ENCODE measurements at regions of chr17 and their contacts with region 1.

Region 1: GRCh38 chr17:49748791-49749190 is 15.1 kb downstream of the FAM117A start:
- DNase-seq: peak in 34 of 35 experiments; percentile 19 to 78 (median 56)
- ATAC-seq: peak; percentile 70 to 78 (median 74)
- H3K4me3 ChIP-seq: no peak overlapping the region
- H3K4me3 Mint-ChIP-seq: peak overlapping the region; percentile 50 to 64 (median 63)
- H3K27ac ChIP-seq: peak overlapping the region; percentile 97
- H3K27ac Mint-ChIP-seq: peak overlapping the region; percentile 96 to 98
- H3K4me1 ChIP-seq: peaks cover 53 to 89% of the 10 kb centered on the region in 2 experiments
- H3K4me1 Mint-ChIP-seq: peaks cover 62 to 90% (median 89%) of the 10 kb centered on the region in 3 donors
- H3K27me3 ChIP-seq: no peaks in the 10 kb centered on the region
- H3K27me3 Mint-ChIP-seq: no peaks in the 10 kb centered on the region

Region 2: DNA sequence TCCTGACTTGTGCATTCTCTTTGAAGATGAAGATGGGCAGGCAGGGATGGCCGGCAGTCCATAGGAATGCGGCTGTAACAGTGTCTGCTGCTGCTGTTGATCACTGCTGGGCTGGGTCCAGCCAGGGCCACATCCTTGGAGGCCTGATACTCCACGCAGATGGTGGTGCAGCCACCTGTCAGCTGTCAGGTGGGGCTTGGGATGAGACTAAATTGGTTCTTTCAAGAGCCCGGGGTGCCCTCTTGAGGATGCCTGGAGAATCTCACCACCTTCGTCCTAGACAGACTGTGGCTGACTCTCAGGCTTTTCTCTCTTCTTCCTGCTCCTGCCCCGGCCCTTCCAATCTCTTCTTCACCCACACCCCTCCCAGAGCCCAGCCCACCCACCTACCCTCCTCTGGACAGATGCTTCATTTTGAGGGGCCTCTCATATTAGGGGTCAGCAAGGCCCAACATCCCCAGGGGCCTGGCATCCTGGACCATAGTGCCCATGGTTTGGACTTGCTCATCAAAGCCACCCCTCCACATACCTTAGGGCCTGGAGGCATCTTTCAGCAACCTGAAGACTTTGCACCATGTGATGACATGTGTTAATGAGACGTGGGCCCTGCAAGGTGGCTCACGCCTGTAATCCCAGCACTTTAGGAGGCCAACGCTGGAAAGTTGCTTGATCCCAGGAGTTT is 1946.3 kb before region 1 on chr17:
- CTCF ChIA-PET with region 1: no interaction called
- POLR2A ChIA-PET with region 1: no interaction called
- DNase-seq: peak in 32 of 35 experiments; percentile 19 to 71 (median 51)
- ATAC-seq: peak; percentile 85 to 93 (median 86)
- H3K4me3 ChIP-seq: no peak overlapping the region
- H3K4me3 Mint-ChIP-seq: no peak overlapping the region
- H3K27ac ChIP-seq: no peak overlapping the region
- H3K27ac Mint-ChIP-seq: no peak overlapping the region
- H3K4me1 ChIP-seq: peaks cover 0 to 6% of the 10 kb centered on the region in 2 experiments
- H3K4me1 Mint-ChIP-seq: no peaks in the 10 kb centered on the region
- H3K27me3 ChIP-seq: peaks cover 0 to 10% of the 10 kb centered on the region in 2 experiments
- H3K27me3 Mint-ChIP-seq: peaks cover 5 to 6% of the 10 kb centered on the region in 2 donors

Region 3: DNA sequence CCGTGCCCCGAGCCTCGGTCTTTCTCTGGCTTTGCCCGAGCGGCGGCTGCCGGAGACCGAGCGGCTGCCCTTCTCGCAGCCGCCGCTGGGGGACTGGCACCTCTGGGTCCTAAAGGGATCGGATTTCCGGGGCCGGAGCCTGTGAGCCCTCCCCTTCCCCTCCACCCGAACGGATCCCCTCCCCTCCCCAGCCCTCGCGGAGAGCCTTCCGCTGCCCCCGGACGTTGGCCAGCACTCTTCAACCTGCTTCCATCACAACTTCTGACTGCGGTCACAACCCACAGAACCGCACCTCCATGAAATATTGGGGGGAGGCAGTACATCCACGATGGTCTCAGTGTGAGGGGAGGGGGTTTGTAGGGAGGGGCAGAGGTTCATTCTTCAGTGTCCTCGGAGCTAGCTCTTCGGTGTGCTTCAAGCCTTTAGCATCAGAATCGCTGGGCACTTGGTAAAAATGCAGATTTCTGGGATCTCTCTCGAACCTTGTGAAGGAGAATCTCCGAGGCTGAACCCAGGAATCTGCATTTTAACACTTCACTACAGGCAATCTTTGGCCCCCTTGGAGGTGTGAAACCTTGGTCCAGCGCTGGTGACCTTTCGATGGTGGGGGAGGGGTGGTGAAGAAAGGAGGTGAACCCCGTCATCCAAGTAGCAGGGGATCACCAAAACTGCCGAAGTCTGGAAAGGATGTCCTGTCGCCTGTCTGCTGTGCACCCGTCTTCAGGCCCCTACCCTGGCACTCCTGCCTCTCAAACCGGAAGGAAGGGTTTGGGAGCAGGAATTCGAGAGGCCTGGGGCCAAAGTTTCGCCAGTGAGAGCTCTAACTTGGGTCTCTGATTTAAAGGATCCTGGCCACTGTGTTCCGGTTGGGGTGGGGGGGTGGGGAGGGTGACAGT is 402.5 kb after region 1 on chr17:
- CTCF ChIA-PET with region 1: no interaction called
- POLR2A ChIA-PET with region 1: interaction called in 1 of 2 experiments, 10 read pairs
- DNase-seq: peak; percentile 64 to 89 (median 79)
- ATAC-seq: peak; percentile 66 to 74 (median 68)
- H3K4me3 ChIP-seq: peak overlapping the region; percentile 62 to 82
- H3K4me3 Mint-ChIP-seq: peak overlapping the region; percentile 82 to 96 (median 87)
- H3K27ac ChIP-seq: peak overlapping the region; percentile 67
- H3K27ac Mint-ChIP-seq: peak overlapping the region; percentile 88 to 94
- H3K4me1 ChIP-seq: peaks cover 22 to 53% of the 10 kb centered on the region in 2 experiments
- H3K4me1 Mint-ChIP-seq: peaks cover 37 to 46% (median 44%) of the 10 kb centered on the region in 3 donors
- H3K27me3 ChIP-seq: no peaks in the 10 kb centered on the region
- H3K27me3 Mint-ChIP-seq: no peaks in the 10 kb centered on the region